ENCODE measurements at regions of chr6 and their contacts with region 1.

Region 1: GRCh38 chr6:80382811-80383210 is 276.3 kb downstream of the BCKDHB start:
- DNase-seq: no peak
- ATAC-seq: no peak
- H3K4me3 ChIP-seq: no peak overlapping the region
- H3K4me3 Mint-ChIP-seq: no peak overlapping the region
- H3K27ac ChIP-seq: no peak overlapping the region
- H3K27ac Mint-ChIP-seq: no peak overlapping the region
- H3K4me1 ChIP-seq: no peaks in the 10 kb centered on the region
- H3K4me1 Mint-ChIP-seq: no peaks in the 10 kb centered on the region
- H3K27me3 ChIP-seq: no peaks in the 10 kb centered on the region
- H3K27me3 Mint-ChIP-seq: no peaks in the 10 kb centered on the region

Region 2: GRCh38 chr6:79777713-79778579 is 604.9 kb before region 1 on chr6:
- CTCF ChIA-PET with region 1: no interaction called
- POLR2A ChIA-PET with region 1: no interaction called
- intact Hi-C with region 1: no loop called
- DNase-seq: peak; percentile 68 to 94 (median 79)
- ATAC-seq: peak; percentile 96
- H3K4me3 ChIP-seq: peak overlapping the region; percentile 60
- H3K4me3 Mint-ChIP-seq: peak overlapping the region; percentile 68 to 83 (median 80)
- H3K27ac ChIP-seq: no peak overlapping the region
- H3K27ac Mint-ChIP-seq: peak overlapping the region in 6 of 9 donors; percentile 0 to 80 (median 44)
- H3K4me1 ChIP-seq: peaks cover 0 to 6% of the 10 kb centered on the region in 2 donors
- H3K4me1 Mint-ChIP-seq: peaks cover 7 to 9% (median 7%) of the 10 kb centered on the region in 7 donors
- H3K27me3 ChIP-seq: no peaks in the 10 kb centered on the region
- H3K27me3 Mint-ChIP-seq: peaks cover 0 to 4% (median 0%) of the 10 kb centered on the region in 5 donors

Region 3: GRCh38 chr6:80338201-80338836 is 44.5 kb before region 1 on chr6:
- CTCF ChIA-PET with region 1: no interaction called
- POLR2A ChIA-PET with region 1: no interaction called
- intact Hi-C with region 1: no loop called
- DNase-seq: peak; percentile 16 to 72 (median 55)
- ATAC-seq: peak; percentile 84
- H3K4me3 ChIP-seq: no peak overlapping the region
- H3K4me3 Mint-ChIP-seq: no peak overlapping the region
- H3K27ac ChIP-seq: no peak overlapping the region
- H3K27ac Mint-ChIP-seq: no peak overlapping the region
- H3K4me1 ChIP-seq: no peaks in the 10 kb centered on the region
- H3K4me1 Mint-ChIP-seq: peaks cover 0 to 6% (median 0%) of the 10 kb centered on the region in 7 donors
- H3K27me3 ChIP-seq: no peaks in the 10 kb centered on the region
- H3K27me3 Mint-ChIP-seq: no peaks in the 10 kb centered on the region

Region 4: GRCh38 chr6:80440496-80441115 is 57.8 kb after region 1 on chr6:
- CTCF ChIA-PET with region 1: no interaction called
- POLR2A ChIA-PET with region 1: no interaction called
- intact Hi-C with region 1: loop called in 1 of 2 experiments (anchors 2 kb)
- DNase-seq: no peak
- ATAC-seq: no peak
- H3K4me3 ChIP-seq: no peak overlapping the region
- H3K4me3 Mint-ChIP-seq: no peak overlapping the region
- H3K27ac ChIP-seq: no peak overlapping the region
- H3K27ac Mint-ChIP-seq: no peak overlapping the region
- H3K4me1 ChIP-seq: no peaks in the 10 kb centered on the region
- H3K4me1 Mint-ChIP-seq: no peaks in the 10 kb centered on the region
- H3K27me3 ChIP-seq: no peaks in the 10 kb centered on the region
- H3K27me3 Mint-ChIP-seq: no peaks in the 10 kb centered on the region